ENCODE measurements at regions of chr6 and their contacts with region 1.

Region 1: GRCh38 chr6:142015011-142015410 is 117.7 kb upstream of the GJE1 start:
- DNase-seq: no peak
- H3K4me3 ChIP-seq: no peak overlapping the region
- H3K4me3 Mint-ChIP-seq: peak overlapping the region; percentile 38
- H3K27ac Mint-ChIP-seq: peak overlapping the region; percentile 45
- H3K4me1 ChIP-seq: peaks cover 25% of the 10 kb centered on the region
- H3K4me1 Mint-ChIP-seq: peaks cover 30% of the 10 kb centered on the region
- H3K27me3 ChIP-seq: no peaks in the 10 kb centered on the region
- H3K27me3 Mint-ChIP-seq: no peaks in the 10 kb centered on the region
- CTCF ChIP-seq: no peak

Region 2: GRCh38 chr6:141866731-141867497 is 148.1 kb before region 1 on chr6:
- CTCF ChIA-PET with region 1: no interaction called
- POLR2A ChIA-PET with region 1: no interaction called
- intact Hi-C with region 1: no loop called
- DNase-seq: no peak
- H3K4me3 ChIP-seq: no peak overlapping the region
- H3K4me3 Mint-ChIP-seq: no peak overlapping the region
- H3K27ac Mint-ChIP-seq: no peak overlapping the region
- H3K4me1 ChIP-seq: no peaks in the 10 kb centered on the region
- H3K4me1 Mint-ChIP-seq: no peaks in the 10 kb centered on the region
- H3K27me3 ChIP-seq: no peaks in the 10 kb centered on the region
- H3K27me3 Mint-ChIP-seq: peaks cover 2% of the 10 kb centered on the region
- CTCF ChIP-seq: no peak

Region 3: GRCh38 chr6:142026204-142026880 is 11.3 kb after region 1 on chr6:
- CTCF ChIA-PET with region 1: no interaction called
- POLR2A ChIA-PET with region 1: no interaction called
- intact Hi-C with region 1: loop called (anchors 1 kb)
- DNase-seq: peak in 1 of 2 experiments; percentile 54
- H3K4me3 ChIP-seq: no peak overlapping the region
- H3K4me3 Mint-ChIP-seq: peak overlapping the region; percentile 4
- H3K27ac Mint-ChIP-seq: peak overlapping the region; percentile 58
- H3K4me1 ChIP-seq: peaks cover 25% of the 10 kb centered on the region
- H3K4me1 Mint-ChIP-seq: peaks cover 17% of the 10 kb centered on the region
- H3K27me3 ChIP-seq: no peaks in the 10 kb centered on the region
- H3K27me3 Mint-ChIP-seq: no peaks in the 10 kb centered on the region
- CTCF ChIP-seq: no peak